ENCODE measurements at regions of chr7 and their contacts with region 1.

Region 1: GRCh38 chr7:45157653-45158401 is at the start of gene RAMP3:
- DNase-seq: no peak
- H3K4me3 ChIP-seq: no peak within 1 kb of the TSS
- H3K4me3 Mint-ChIP-seq: peak within 1 kb of the TSS in 1 of 2 donors; percentile 62
- H3K27ac ChIP-seq: no peak within 1 kb of the TSS
- H3K27ac Mint-ChIP-seq: peak within 1 kb of the TSS in 2 of 7 donors; percentile 2 to 20
- H3K4me1 ChIP-seq: peaks cover 12 to 20% of the 10 kb centered on the region in 2 donors
- H3K4me1 Mint-ChIP-seq: peaks cover 17% of the 10 kb centered on the region
- H3K27me3 ChIP-seq: peaks cover 4 to 32% of the 10 kb centered on the region in 2 donors
- H3K27me3 Mint-ChIP-seq: peaks cover 20 to 40% (median 35%) of the 10 kb centered on the region in 3 donors
- CTCF ChIP-seq: no peak
- polyA plus RNA-seq, gene RAMP3: not detected

Region 2: GRCh38 chr7:45080265-45080962 is 77.4 kb before region 1 on chr7:
- intact Hi-C with region 1: no loop called
- DNase-seq: no peak
- H3K4me3 ChIP-seq: no peak overlapping the region
- H3K4me3 Mint-ChIP-seq: no peak overlapping the region
- H3K27ac ChIP-seq: peak overlapping the region in 1 of 2 donors; percentile 40
- H3K27ac Mint-ChIP-seq: peak overlapping the region; percentile 21 to 79 (median 67)
- H3K4me1 ChIP-seq: no peaks in the 10 kb centered on the region
- H3K4me1 Mint-ChIP-seq: no peaks in the 10 kb centered on the region
- H3K27me3 ChIP-seq: no peaks in the 10 kb centered on the region
- H3K27me3 Mint-ChIP-seq: peaks cover 1 to 3% (median 2%) of the 10 kb centered on the region in 3 donors
- CTCF ChIP-seq: no peak

Region 3: DNA sequence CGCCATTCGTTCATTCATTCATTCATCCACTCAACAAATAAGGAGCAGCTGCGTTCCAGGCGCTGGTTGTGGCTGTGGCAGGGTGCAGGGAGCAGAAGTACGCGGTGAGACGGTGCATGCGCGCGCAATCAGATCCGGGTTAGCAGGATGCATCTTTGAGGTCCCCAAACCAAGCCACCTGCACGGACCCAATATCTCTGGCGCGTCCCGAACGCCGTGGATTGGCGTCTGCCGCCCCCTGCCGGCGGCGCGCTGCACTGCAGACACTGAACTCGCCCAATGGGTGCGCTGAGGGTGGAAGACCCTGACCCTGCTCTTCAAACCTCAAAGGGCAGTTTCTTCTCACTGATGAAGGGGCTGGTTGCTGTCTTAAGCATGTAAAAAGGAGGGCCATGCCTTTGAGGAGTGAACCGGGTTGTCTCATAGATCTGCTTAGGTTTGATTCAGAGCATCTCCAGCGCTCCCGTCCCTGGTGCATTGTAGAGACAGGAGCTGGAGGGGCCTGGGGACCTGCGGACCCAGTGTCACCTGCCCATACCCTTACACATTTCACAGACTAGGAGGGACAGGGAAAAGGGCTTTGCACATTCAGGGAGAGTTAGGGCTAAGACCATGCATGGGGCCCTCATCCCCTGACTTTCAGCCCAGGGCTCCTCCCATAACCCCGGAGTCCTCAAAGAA is 102.3 kb after region 1 on chr7:
- intact Hi-C with region 1: loop called (anchors 1 kb)
- DNase-seq: peak; percentile 36 to 55 (median 44)
- H3K4me3 ChIP-seq: no peak overlapping the region
- H3K4me3 Mint-ChIP-seq: no peak overlapping the region
- H3K27ac ChIP-seq: no peak overlapping the region
- H3K27ac Mint-ChIP-seq: peak overlapping the region in 1 of 7 donors; percentile 70
- H3K4me1 ChIP-seq: no peaks in the 10 kb centered on the region
- H3K4me1 Mint-ChIP-seq: no peaks in the 10 kb centered on the region
- H3K27me3 ChIP-seq: no peaks in the 10 kb centered on the region
- H3K27me3 Mint-ChIP-seq: peaks cover 0 to 19% (median 13%) of the 10 kb centered on the region in 3 donors
- CTCF ChIP-seq: peak; percentile 98

Region 4: GRCh38 chr7:45863715-45864114 is 705.9 kb after region 1 on chr7:
- intact Hi-C with region 1: loop called (anchors 10 kb)
- DNase-seq: no peak
- H3K4me3 ChIP-seq: no peak overlapping the region
- H3K4me3 Mint-ChIP-seq: no peak overlapping the region
- H3K27ac ChIP-seq: no peak overlapping the region
- H3K27ac Mint-ChIP-seq: peak overlapping the region in 1 of 7 donors; percentile 5
- H3K4me1 ChIP-seq: no peaks in the 10 kb centered on the region
- H3K4me1 Mint-ChIP-seq: no peaks in the 10 kb centered on the region
- H3K27me3 ChIP-seq: no peaks in the 10 kb centered on the region
- H3K27me3 Mint-ChIP-seq: peaks cover 0 to 6% (median 4%) of the 10 kb centered on the region in 3 donors
- CTCF ChIP-seq: no peak

Measured in CD14-positive monocyte (primary cell).